ENCODE measurements at regions of chr9 and their contacts with region 1.

Region 1: DNA sequence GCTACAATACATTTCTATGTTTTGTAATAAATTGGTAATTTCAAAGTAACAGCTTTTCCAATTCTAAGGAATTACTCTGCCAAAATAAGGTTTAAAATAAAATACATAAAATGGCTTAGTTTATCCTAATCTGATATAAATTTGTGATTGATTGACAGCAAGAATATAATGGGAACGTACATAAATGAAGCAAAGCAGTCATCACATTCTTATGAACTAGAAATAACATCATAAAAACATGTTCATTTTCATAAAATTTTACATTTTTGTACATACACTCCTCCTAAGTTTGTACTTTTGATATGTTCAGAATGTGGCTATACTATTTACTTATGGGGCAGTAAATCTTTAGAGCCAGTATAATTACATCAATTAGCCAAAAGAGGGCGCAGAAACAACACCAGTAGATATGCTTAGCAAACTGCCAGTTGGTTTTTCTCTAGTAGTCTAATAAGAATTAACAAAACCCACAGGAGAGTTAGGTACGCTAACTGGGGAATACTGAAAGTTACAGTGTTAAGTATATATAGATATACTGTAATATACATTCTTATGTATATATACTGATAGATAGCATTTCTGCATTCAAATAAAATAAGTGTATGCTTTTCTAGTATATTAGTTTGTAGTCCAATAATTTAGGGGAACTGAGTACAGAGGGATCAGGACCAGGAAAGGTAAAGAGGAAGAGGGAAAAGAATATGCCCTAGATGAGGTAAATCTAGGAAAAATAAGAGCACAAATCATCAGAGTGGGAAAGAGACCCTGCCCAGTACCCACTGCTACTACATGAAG is 76.8 kb downstream of the ZDHHC21 start:
- DNase-seq: no peak
- ATAC-seq: peak in 1 of 2 donors; percentile 48
- H3K4me3 ChIP-seq: no peak overlapping the region
- H3K27ac ChIP-seq: no peak overlapping the region
- H3K4me1 ChIP-seq: no peaks in the 10 kb centered on the region
- H3K27me3 ChIP-seq: no peaks in the 10 kb centered on the region

Region 2: GRCh38 chr9:14547245-14548060 is 68.9 kb before region 1 on chr9:
- intact Hi-C with region 1: no loop called
- DNase-seq: no peak
- ATAC-seq: peak in 1 of 2 donors; percentile 33
- H3K4me3 ChIP-seq: no peak overlapping the region
- H3K27ac ChIP-seq: no peak overlapping the region
- H3K4me1 ChIP-seq: no peaks in the 10 kb centered on the region
- H3K27me3 ChIP-seq: no peaks in the 10 kb centered on the region

Region 3: DNA sequence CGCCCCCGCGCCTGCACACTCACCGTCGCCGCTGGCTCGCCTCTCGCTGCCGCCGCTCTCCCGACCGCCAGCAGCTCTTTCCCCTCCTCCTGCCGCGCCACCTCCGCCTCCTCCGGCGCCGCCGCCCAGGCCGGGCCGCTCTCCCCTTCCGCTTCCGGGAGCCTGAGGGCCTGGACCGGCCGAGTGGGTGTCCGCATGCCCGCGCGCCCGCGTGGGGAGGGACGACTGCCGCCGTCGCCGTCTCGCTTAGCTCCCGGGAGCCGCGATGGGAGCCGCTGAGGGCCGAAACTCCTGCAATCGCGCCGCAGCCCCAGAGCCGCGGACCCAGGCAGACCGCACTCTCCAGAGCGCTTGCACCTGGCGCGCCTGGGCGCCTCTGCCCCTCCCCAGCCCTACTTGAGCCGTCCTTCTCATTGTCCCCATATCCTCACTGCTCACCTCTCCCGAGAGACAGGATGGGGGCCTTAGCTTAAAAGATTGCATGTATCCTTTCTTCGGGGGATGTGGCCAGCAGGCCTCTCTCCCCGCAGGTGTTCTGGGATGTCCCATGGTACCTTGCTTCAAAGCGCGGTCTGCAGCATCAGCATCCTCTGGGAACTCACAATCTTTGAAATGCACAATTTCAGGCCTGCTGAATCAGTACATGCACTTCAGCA is 76.9 kb after region 1 on chr9 and contains the start of gene ZDHHC21:
- intact Hi-C with region 1: no loop called
- DNase-seq: peak; percentile 82 to 92 (median 91)
- ATAC-seq: peak; percentile 99
- H3K4me3 ChIP-seq: peak within 1 kb of the TSS; percentile 90
- H3K27ac ChIP-seq: no peak within 1 kb of the TSS
- H3K4me1 ChIP-seq: peaks cover 2% of the 10 kb centered on the region
- H3K27me3 ChIP-seq: no peaks in the 10 kb centered on the region
- total RNA-seq, gene ZDHHC21: 9.0 to 11.7 (median 11.3) TPM

Region 4: GRCh38 chr9:14756291-14756690 is 139.9 kb after region 1 on chr9:
- intact Hi-C with region 1: loop called in 2 of 4 experiments (anchors 5 to 10 kb)
- DNase-seq: no peak
- ATAC-seq: no peak
- H3K4me3 ChIP-seq: no peak overlapping the region
- H3K27ac ChIP-seq: no peak overlapping the region
- H3K4me1 ChIP-seq: no peaks in the 10 kb centered on the region
- H3K27me3 ChIP-seq: no peaks in the 10 kb centered on the region

Region 5: DNA sequence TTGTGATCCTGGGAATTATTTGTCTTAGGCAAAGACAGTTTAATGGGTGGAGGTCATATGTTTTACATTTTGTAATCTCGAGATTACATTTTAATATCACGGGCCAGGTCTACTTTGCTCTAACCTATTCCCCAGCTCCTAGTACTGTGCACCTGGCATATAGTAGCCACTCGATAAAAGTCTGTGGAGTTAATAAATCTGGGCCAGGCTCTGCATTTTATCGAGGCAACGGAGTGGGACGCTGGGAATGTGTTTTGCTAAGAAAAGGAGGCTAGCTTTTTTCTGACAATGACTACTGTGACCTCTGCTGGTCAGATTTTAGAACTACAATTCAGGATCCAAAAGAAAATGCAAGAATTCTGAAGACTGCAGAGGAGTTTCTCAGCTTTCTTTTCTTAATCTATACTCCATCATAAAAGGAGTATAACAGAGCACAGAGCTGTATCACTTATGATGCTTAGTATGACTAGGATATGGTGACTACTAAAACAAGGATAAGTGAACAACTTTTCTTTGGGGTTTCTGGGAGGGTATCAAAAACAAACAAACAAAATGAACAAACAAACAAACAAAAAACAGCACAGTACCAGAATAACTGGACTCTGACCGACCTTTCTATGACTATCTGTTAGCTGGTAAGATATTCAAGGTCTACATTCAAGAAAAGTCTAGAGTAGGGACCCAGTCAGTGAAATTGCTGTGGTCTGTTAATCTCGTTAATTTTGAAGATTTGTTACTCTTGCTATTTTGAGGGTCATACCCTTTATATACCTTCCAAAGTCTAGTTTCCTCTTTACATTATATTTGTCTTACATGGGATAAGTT is 152.2 kb after region 1 on chr9:
- intact Hi-C with region 1: loop called in 2 of 4 experiments (anchors 5 to 10 kb)
- DNase-seq: no peak
- ATAC-seq: peak; percentile 39 to 63
- H3K4me3 ChIP-seq: no peak overlapping the region
- H3K27ac ChIP-seq: no peak overlapping the region
- H3K4me1 ChIP-seq: no peaks in the 10 kb centered on the region
- H3K27me3 ChIP-seq: no peaks in the 10 kb centered on the region

Measured in right cardiac atrium (tissue), 5 donors.